Right ventricle myocardium inferior (tissue), 1 donor: ENCODE measurements at regions of chr10 and their contacts with region 1.

Region 1: DNA sequence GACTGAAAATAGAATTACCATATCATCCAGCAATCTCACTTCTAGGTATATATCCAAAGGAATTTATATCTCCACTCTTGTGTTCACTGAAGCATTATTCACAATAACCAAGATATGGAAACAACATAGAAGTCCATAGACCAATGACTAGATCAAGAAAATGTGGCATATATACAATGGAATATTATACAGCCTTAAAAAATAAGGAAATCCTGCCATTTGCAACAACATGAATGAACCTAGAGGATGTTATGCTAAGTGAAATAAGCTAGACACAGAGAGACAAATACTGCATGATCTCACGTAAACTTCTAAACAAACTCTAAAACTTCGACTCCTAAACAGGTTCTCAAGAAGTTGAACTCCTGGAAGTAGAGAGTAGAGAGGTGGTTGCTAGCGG is 254.5 kb downstream of the SKIDA1 start:
- DNase-seq: no peak
- ATAC-seq: no peak

Region 2: DNA sequence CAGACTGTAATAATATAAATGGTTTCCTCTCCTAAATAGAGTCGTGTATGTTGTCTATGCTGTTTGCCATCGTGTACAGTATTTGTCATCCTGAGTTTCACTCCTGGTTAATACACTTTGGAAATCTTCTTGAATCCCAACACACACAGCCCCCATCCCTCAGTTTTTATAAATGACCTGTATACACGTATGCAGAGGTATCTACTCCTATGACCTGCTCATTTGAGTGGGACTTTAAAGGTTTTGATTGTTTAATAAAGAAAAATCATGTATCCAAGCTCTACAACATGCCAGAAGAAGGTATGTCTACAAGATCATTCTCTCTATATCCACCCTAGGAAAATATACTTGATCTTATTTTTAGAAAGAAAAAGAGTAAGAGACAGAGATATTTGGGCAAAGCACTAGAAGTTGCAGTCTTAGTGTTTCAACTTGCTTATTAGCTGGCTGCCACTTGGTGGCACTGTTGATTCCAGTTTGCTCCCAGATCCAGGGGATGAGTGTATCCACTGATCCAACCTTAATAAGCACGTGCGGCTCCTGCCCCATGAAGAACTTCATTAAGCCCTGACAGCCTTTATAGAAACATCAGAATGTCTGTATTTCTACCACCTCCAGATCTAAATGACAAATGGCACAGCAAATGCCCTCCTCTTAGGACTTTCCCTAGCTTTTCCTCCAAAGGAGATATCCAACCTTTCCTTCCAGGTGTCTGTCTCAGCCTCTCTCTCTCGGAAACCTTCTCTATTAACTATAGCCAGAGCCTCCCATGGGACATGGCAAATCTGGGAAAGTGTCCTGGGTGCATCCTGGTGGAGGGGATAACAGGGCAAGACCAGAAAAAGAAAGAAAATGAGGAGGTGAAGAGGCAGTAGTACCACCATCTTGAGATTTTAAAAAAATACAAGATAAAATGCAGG is 192.3 kb before region 1 on chr10:
- intact Hi-C with region 1: loop called (anchors 1 kb)
- DNase-seq: no peak
- ATAC-seq: peak; percentile 78

Region 3: DNA sequence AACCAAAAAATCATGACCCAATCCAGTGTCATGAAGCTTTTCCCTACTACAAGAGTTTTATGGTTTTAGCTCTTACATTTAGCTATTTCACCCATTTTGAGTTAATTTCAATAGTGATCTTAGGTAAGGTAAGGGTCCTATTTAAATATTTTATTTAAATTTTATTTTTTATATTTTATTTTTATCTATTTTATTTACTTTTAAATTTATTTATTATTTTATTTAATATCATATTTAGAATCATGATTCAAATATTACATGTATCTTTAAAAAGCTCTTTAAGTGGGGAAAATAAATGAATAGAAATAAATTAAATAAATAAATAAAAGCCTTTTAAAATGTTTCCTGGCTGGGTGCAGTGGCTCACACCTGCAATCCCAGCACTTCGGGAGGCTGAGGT is 21.5 kb before region 1 on chr10:
- intact Hi-C with region 1: no loop called
- DNase-seq: no peak
- ATAC-seq: no peak

Region 4: DNA sequence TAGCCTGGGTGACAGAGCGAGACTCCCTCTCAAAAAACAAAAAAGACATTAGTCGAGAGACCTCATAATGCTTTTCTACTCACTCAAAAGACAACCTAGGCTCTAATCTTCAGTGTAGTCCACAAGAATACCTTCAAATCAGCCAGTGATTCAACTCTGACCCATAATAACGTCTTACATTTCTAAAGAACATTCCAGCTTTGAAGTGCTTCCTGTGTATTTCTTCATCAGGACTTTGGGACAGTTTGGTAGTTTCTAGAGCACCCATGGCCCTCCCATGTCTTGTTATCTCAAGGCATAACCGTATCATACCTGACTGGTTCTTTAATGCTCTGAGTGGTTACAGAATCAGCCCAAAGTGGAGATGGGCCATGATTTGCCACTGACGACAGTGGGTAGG is 33.2 kb after region 1 on chr10:
- intact Hi-C with region 1: no loop called
- DNase-seq: no peak
- ATAC-seq: no peak